ENCODE measurements at regions of chr2 and their contacts with region 1.

Region 1: DNA sequence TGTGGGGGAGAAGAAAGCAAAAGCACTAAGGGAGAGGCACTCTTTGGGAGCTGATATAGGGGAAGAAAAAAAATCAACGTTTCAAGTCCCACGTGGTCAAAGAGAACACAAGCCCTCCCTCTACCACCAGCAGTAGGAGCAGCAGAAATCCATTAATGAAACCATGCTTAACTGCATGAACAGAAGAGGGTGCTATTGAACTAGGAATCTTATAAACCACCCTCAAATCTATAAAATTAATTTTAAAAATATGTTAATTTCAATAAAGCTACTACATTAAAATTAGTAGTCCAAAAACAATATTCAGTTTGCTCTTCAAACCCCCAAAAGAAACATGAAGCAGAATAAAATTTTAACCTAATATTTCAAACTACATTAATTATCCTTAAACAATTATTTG is 147.8 kb downstream of the TMEM18 start:
- DNase-seq: peak; percentile 67 to 81 (median 77)
- H3K4me3 ChIP-seq: no peak overlapping the region
- H3K27ac ChIP-seq: no peak overlapping the region
- H3K4me1 ChIP-seq: no peaks in the 10 kb centered on the region
- H3K27me3 ChIP-seq: peaks cover 0 to 7% (median 0%) of the 10 kb centered on the region in 5 experiments

Region 2: DNA sequence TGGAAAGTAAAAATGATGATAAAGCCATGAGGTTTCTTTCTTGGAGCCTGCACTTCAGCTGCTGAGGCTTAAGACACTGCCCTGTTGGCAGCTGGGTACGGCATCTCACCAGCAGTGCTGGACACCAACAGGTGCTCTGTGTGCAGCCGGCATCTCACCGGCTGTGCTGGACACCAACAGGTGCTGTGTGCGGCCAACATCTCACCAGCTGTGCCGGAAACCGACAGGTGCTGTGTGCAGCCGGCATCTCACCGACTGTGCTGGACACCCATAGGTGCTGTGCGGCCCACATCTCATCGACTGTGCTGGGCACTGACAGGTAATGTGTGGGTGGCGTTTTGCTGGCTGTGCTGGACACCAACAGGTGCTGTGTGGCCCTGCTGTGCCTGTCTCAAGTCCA is 43.1 kb before region 1 on chr2:
- CTCF ChIA-PET with region 1: no interaction called
- POLR2A ChIA-PET with region 1: no interaction called
- DNase-seq: no peak
- H3K4me3 ChIP-seq: no peak overlapping the region
- H3K27ac ChIP-seq: no peak overlapping the region
- H3K4me1 ChIP-seq: no peaks in the 10 kb centered on the region
- H3K27me3 ChIP-seq: peaks cover 0 to 7% (median 0%) of the 10 kb centered on the region in 5 experiments

Region 3: GRCh38 chr2:626491-627339 is 97.3 kb after region 1 on chr2:
- CTCF ChIA-PET with region 1: no interaction called
- POLR2A ChIA-PET with region 1: no interaction called
- DNase-seq: no peak
- H3K4me3 ChIP-seq: no peak overlapping the region
- H3K27ac ChIP-seq: no peak overlapping the region
- H3K4me1 ChIP-seq: no peaks in the 10 kb centered on the region
- H3K27me3 ChIP-seq: peaks cover 0 to 4% (median 3%) of the 10 kb centered on the region in 5 experiments

Region 4: GRCh38 chr2:636641-637405 is 107.4 kb after region 1 on chr2:
- CTCF ChIA-PET with region 1: interaction called, 27 read pairs
- POLR2A ChIA-PET with region 1: no interaction called
- DNase-seq: peak; percentile 52 to 64 (median 57)
- H3K4me3 ChIP-seq: peak overlapping the region; percentile 10 to 78 (median 38)
- H3K27ac ChIP-seq: no peak overlapping the region
- H3K4me1 ChIP-seq: peaks cover 0 to 7% (median 4%) of the 10 kb centered on the region in 4 experiments
- H3K27me3 ChIP-seq: peaks cover 0 to 10% (median 0%) of the 10 kb centered on the region in 5 experiments

Measured in common myeloid progenitor, CD34-positive (primary cell).